Activated CD4-positive, alpha-beta T cell treated with anti-CD3 and anti-CD28 coated beads, Interleukin-2, amount 10 ng/mL, durations not matched to agents 7 days and 5 days (primary cell): ENCODE measurements at regions of chr5 and their contacts with region 1.

Region 1: GRCh38 chr5:95961617-95962474 is at the start of gene ELL2:
- DNase-seq: peak; percentile 97
- H3K4me3 Mint-ChIP-seq: peak within 1 kb of the TSS; percentile 92
- H3K27ac Mint-ChIP-seq: peak within 1 kb of the TSS; percentile 97
- H3K4me1 Mint-ChIP-seq: peaks cover 38% of the 10 kb centered on the region
- H3K27me3 Mint-ChIP-seq: no peaks in the 10 kb centered on the region
- total RNA-seq, gene ELL2: 12.5 to 14.7 TPM

Region 2: GRCh38 chr5:95583992-95584391 is 377.9 kb before region 1 on chr5:
- CTCF ChIA-PET with region 1: no interaction called
- POLR2A ChIA-PET with region 1: no interaction called
- DNase-seq: no peak
- H3K4me3 Mint-ChIP-seq: no peak overlapping the region
- H3K27ac Mint-ChIP-seq: no peak overlapping the region
- H3K4me1 Mint-ChIP-seq: no peaks in the 10 kb centered on the region
- H3K27me3 Mint-ChIP-seq: no peaks in the 10 kb centered on the region

Region 3: GRCh38 chr5:95949810-95950209 is 12.0 kb before region 1 on chr5:
- CTCF ChIA-PET with region 1: interaction called, 28 read pairs
- POLR2A ChIA-PET with region 1: no interaction called
- DNase-seq: no peak
- H3K4me3 Mint-ChIP-seq: no peak overlapping the region
- H3K27ac Mint-ChIP-seq: no peak overlapping the region
- H3K4me1 Mint-ChIP-seq: peaks cover 37% of the 10 kb centered on the region
- H3K27me3 Mint-ChIP-seq: no peaks in the 10 kb centered on the region

Region 4: DNA sequence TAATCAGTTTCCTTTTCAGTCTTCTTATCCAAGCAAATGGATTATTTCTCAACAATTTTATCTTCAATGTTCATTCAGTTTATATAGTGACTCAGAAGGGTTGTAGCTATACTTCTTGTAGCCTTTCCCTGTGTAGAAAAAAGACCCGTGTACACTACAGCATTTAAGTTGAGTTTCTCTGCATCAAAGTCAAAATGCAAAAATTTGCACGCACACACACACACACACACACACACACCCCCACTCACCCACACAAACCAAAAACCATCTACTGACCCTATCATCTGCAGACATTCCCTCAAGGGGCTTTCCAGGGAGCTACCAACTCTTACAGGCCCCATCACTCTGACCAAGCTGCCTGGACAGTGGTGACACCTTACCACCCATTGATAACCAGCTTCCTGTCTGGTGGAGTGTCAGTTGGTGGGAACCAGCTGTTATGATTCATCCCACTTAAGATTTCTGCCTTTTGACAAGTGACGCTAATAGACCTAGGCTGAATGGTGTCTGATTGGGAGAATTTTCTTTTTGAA is 12.0 kb after region 1 on chr5:
- CTCF ChIA-PET with region 1: interaction called, 36 read pairs
- POLR2A ChIA-PET with region 1: no interaction called
- DNase-seq: no peak
- H3K4me3 Mint-ChIP-seq: no peak overlapping the region
- H3K27ac Mint-ChIP-seq: no peak overlapping the region
- H3K4me1 Mint-ChIP-seq: peaks cover 7% of the 10 kb centered on the region
- H3K27me3 Mint-ChIP-seq: peaks cover 3% of the 10 kb centered on the region